ENCODE measurements at regions of chr2 and their contacts with region 1.

Region 1: DNA sequence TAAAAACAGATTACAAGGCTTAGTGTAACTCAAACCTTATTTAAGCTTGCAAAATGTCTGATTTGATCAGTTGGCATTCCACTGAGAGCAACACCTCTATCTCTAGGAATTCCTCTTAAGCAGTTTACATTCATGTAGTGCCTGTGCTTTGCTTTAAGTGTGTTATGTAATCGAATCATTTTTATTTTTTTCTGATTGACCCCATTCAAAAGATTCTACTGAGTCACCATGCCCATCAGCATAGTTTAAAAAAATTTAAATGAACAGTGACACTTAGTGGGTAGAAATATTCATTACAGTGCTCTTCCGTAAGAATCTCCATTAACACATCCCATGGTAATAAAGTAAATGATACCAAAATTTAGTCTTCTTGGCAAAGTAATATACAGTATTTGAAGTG is 67.8 kb upstream of the SLC4A10 start:
- DNase-seq: no peak
- ATAC-seq: no peak
- H3K4me3 ChIP-seq: no peak overlapping the region
- H3K27ac ChIP-seq: no peak overlapping the region
- H3K4me1 ChIP-seq: no peaks in the 10 kb centered on the region
- H3K27me3 ChIP-seq: no peaks in the 10 kb centered on the region
- CTCF ChIP-seq: 0 out of 6 replicates have a peak, but pooled peaks of 1 of the 3 experiments have one; percentile 1
- EP300 ChIP-seq: no peak
- POLR2A ChIP-seq: no peak
- RAD21 ChIP-seq: no peak

Region 2: DNA sequence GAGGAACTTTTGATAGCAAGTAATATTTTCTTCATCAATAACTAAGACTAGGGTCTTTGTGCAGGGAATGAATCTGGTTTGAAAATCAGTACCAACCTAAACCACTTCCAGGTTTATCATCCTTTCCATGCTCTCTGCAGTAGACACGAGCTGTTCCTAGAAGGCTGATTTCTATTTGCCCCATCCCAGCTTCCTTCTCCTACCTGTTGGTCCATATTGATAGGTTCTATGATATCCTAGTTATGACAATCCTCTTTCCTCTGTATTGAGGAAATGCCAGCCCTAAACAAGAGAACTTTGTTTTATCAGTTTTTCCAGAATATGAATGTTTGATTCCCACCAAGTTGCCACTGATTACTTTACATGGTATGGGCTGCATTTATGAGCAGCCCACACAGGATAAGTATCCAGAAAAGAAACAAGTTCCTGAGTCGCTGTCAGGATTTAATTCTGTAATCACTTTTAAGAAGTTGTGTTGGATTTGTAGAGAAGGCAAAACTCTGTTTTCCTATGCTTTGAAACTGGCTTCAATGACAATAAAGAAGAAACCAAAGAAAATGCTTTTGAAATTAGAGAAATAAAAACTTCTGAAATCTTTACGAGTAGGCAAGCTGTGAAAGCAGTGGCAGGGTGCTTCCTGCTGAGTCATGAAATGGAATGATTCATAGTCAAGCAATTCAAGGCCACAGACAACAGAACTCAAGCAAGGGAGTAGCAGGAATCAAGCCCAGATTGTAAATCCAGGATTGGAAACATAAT is 433.5 kb before region 1 on chr2:
- CTCF ChIA-PET with region 1: no interaction called
- POLR2A ChIA-PET with region 1: no interaction called
- in situ Hi-C with region 1: no loop called
- intact Hi-C with region 1: no loop called
- DNase-seq: peak; percentile 29 to 41 (median 34)
- ATAC-seq: peak; percentile 87; the same call in 2 of the 3 replicates
- H3K4me3 ChIP-seq: no peak overlapping the region
- H3K27ac ChIP-seq: no peak overlapping the region
- H3K4me1 ChIP-seq: no peaks in the 10 kb centered on the region
- H3K27me3 ChIP-seq: no peaks in the 10 kb centered on the region
- CTCF ChIP-seq: no peak
- EP300 ChIP-seq: 0 out of 2 replicates have a peak, but pooled peaks have one; percentile 19
- POLR2A ChIP-seq: no peak
- RAD21 ChIP-seq: no peak

Region 3: DNA sequence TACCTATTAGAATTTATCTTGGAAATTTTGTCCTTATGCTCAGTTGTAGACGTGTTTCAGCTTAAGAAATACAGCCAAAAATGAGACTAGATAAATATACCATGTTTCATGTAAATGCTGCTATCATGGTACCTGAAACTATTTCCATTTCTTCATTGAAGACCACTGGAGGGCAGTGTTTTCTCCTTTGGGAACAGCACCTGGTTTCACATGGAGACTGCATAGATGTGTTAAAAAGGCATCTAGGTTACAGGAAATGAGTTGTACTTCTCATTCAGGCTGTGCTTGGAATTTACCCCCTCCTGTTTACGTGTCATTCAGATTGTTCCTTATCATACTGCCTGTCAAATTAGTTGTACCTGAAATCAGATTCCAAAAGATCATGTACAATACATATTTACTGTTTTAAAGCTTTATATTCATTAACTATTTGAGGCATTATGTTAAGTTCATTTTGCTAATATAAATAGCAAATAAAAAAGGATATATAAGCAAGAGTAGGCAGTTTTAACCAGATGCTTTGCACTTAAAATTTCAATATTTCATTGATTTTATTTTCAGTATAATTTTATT is 305.5 kb before region 1 on chr2:
- CTCF ChIA-PET with region 1: interaction called, 3 read pairs
- POLR2A ChIA-PET with region 1: no interaction called
- in situ Hi-C with region 1: no loop called
- intact Hi-C with region 1: loop called (anchors 10 kb)
- DNase-seq: peak; percentile 39 to 80 (median 60)
- ATAC-seq: peak; percentile 90
- H3K4me3 ChIP-seq: no peak overlapping the region
- H3K27ac ChIP-seq: no peak overlapping the region
- H3K4me1 ChIP-seq: peaks cover 0 to 2% of the 10 kb centered on the region in 2 experiments; a peak in 1 of 5 replicates
- H3K27me3 ChIP-seq: no peaks in the 10 kb centered on the region; a peak in 1 of 5 replicates
- CTCF ChIP-seq: peak; percentile 61 to 75 (median 70)
- EP300 ChIP-seq: no peak
- POLR2A ChIP-seq: no peak
- RAD21 ChIP-seq: peak; percentile 58 to 82

Region 4: DNA sequence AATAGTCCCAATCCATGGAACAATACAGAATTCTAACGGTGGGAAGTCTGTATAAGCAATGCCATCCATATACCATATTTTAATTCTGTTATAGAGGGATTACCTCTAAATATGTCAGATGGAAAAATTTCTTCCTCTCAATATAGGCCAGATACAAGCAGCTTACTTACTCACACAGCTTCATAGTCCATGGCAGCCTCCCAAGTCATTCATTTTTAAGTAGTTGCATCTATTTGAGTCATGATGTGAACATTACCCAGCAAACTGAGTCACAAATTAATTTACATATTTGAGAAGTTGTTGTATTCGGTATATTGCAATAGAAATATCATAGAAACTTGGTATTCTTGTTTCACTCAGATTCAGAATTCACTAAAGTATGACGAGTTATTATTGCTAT is 120.0 kb before region 1 on chr2:
- CTCF ChIA-PET with region 1: no interaction called
- POLR2A ChIA-PET with region 1: no interaction called
- in situ Hi-C with region 1: no loop called
- intact Hi-C with region 1: no loop called
- DNase-seq: no peak
- ATAC-seq: no peak
- H3K4me3 ChIP-seq: no peak overlapping the region
- H3K27ac ChIP-seq: no peak overlapping the region
- H3K4me1 ChIP-seq: no peaks in the 10 kb centered on the region
- H3K27me3 ChIP-seq: no peaks in the 10 kb centered on the region
- CTCF ChIP-seq: no peak
- EP300 ChIP-seq: no peak
- POLR2A ChIP-seq: no peak
- RAD21 ChIP-seq: no peak